GM23248 (cell line): ENCODE measurements at regions of chr11 and their contacts with region 1.

Region 1: GRCh38 chr11:1050581-1051355 is 14.2 kb upstream of the MUC6 start:
- DNase-seq: peak; percentile 81
- H3K4me3 ChIP-seq: no peak overlapping the region
- H3K27ac ChIP-seq: no peak overlapping the region
- H3K4me1 ChIP-seq: no peaks in the 10 kb centered on the region
- H3K27me3 ChIP-seq: peaks cover 28% of the 10 kb centered on the region

Region 2: GRCh38 chr11:908273-908672 is 142.5 kb before region 1 on chr11:
- in situ Hi-C with region 1: loop called (anchors 10 kb)
- DNase-seq: peak; percentile 34
- H3K4me3 ChIP-seq: no peak overlapping the region
- H3K27ac ChIP-seq: no peak overlapping the region
- H3K4me1 ChIP-seq: 0 out of 2 replicates have a peak, but pooled peaks cover 3% of the 10 kb centered on the region
- H3K27me3 ChIP-seq: no peaks in the 10 kb centered on the region